Activated naive CD4-positive, alpha-beta T cell treated with anti-CD3 and anti-CD28 coated beads, Interleukin-2, amount 10 ng/mL, durations not matched to agents 7 days and 5 days (primary cell): ENCODE measurements at regions of chr12 and their contacts with region 1.

Region 1: DNA sequence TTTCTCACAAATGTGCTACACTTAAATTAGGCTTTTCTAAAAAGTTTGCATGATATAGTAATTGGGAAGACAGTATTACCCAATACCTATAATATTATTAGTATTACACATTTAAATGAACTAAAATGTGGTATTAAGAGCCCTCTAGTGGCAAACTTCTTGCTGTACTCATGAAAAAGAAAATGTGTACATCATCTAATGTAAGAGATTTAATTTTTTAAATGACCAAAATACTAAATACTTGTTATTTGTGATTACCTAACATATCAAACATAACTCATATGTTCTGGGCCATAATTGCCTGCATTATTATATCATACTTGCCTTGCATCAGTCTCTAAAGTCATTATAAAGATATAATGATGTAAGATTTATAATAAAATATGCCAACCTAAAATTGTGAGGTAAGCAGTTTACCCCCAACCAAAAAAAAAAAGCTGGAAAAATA is 64.2 kb downstream of the DNAI7 start:
- DNase-seq: no peak
- H3K4me3 Mint-ChIP-seq: no peak overlapping the region
- H3K27ac Mint-ChIP-seq: no peak overlapping the region
- H3K4me1 Mint-ChIP-seq: no peaks in the 10 kb centered on the region
- H3K27me3 Mint-ChIP-seq: no peaks in the 10 kb centered on the region

Region 2: DNA sequence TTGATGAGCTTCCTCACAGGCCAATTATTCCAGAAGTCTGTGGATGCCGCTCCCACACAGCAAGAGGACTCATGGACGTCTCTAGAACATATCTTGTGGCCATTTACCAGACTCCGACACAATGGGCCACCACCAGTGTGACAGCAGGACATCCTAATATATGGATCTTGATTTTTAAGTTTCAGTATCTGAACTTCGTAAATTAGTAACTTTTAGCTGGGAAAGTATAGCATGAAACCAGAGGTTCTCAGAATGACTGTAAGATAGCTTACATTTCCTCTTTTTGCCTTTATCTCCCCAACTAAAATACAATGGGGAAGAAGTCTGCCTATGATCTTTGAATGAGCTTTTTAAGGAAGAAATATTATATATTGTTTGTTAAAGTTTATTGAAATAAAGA is 22.8 kb before region 1 on chr12:
- CTCF ChIA-PET with region 1: no interaction called
- DNase-seq: no peak
- H3K4me3 Mint-ChIP-seq: no peak overlapping the region
- H3K27ac Mint-ChIP-seq: no peak overlapping the region
- H3K4me1 Mint-ChIP-seq: no peaks in the 10 kb centered on the region
- H3K27me3 Mint-ChIP-seq: no peaks in the 10 kb centered on the region

Region 3: DNA sequence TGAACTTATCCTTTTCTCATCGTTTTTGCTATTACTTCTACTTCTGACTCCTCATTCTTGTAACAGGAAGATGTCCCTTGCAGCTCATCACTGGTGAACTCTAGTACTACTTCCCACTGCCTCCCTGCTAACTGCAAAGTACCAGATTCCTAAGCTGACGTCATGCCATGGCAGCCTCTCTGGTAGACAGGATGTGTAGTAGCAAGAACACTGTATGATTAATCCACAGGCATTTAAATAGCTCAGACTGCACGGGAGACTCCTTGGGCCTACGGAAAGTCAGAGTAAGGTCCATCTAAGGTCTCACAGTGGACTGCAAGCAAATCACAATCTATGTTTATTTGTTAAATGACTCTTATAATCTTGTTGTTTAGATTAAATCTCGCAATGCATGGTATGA is 20.7 kb after region 1 on chr12:
- CTCF ChIA-PET with region 1: interaction called, 31 read pairs
- DNase-seq: no peak
- H3K4me3 Mint-ChIP-seq: no peak overlapping the region
- H3K27ac Mint-ChIP-seq: no peak overlapping the region
- H3K4me1 Mint-ChIP-seq: peaks cover 6% of the 10 kb centered on the region
- H3K27me3 Mint-ChIP-seq: no peaks in the 10 kb centered on the region

Region 4: GRCh38 chr12:25295361-25295760 is 164.6 kb after region 1 on chr12:
- CTCF ChIA-PET with region 1: no interaction called
- DNase-seq: no peak
- H3K4me3 Mint-ChIP-seq: no peak overlapping the region
- H3K27ac Mint-ChIP-seq: no peak overlapping the region
- H3K4me1 Mint-ChIP-seq: peaks cover 9% of the 10 kb centered on the region
- H3K27me3 Mint-ChIP-seq: peaks cover 4% of the 10 kb centered on the region